ENCODE measurements at regions of chr9 and their contacts with region 1.

Region 1: DNA sequence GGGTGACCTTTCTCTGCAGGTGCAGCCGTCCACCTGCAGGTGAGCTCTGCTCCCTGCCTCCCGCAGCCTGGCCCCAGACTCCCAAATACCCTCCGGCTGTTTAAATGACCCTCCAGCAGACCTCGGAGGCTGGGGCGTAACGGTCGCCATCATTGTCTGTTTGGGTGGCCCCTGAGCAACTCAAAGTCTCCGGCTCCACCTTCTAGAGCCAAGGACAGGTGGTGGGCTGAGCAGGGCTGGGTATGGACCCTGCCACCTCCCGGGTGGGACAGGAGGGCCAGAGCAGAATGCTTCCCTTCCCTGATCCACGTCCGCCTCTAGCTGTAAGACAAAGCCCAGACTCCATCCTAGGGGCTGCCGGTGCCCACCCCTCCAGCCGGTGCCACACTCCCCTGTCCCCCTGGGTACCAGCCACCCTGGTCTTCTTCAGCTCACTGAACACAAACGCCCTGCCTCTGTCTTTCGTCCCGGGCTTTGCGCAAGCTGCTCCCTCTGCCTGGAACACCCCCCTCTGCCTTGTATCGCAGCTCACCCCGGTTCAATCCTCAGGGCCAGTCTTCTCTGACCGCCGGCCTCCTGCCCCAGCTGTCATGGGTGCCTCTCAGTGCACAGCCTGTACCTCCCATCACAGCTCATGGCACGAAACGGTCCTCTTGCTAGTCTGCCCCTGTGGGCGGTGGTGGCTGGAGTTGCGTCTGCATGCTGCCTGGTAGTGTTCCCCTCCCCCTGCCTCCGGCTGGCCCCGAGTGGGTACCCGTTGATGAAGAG is 34.3 kb upstream of the FIBCD1 start:
- DNase-seq: peak in 3 of 4 experiments; percentile 63 to 65 (median 64)
- ATAC-seq: peak; percentile 8
- H3K4me3 ChIP-seq: no peak overlapping the region
- H3K27ac ChIP-seq: no peak overlapping the region
- H3K4me1 ChIP-seq: peaks cover 0 to 20% of the 10 kb centered on the region in 2 experiments; a peak in 1 of 5 replicates
- H3K27me3 ChIP-seq: peaks cover 78 to 98% of the 10 kb centered on the region in 2 experiments
- CTCF ChIP-seq: no peak
- EP300 ChIP-seq: no peak
- POLR2A ChIP-seq: no peak
- RAD21 ChIP-seq: no peak

Region 2: DNA sequence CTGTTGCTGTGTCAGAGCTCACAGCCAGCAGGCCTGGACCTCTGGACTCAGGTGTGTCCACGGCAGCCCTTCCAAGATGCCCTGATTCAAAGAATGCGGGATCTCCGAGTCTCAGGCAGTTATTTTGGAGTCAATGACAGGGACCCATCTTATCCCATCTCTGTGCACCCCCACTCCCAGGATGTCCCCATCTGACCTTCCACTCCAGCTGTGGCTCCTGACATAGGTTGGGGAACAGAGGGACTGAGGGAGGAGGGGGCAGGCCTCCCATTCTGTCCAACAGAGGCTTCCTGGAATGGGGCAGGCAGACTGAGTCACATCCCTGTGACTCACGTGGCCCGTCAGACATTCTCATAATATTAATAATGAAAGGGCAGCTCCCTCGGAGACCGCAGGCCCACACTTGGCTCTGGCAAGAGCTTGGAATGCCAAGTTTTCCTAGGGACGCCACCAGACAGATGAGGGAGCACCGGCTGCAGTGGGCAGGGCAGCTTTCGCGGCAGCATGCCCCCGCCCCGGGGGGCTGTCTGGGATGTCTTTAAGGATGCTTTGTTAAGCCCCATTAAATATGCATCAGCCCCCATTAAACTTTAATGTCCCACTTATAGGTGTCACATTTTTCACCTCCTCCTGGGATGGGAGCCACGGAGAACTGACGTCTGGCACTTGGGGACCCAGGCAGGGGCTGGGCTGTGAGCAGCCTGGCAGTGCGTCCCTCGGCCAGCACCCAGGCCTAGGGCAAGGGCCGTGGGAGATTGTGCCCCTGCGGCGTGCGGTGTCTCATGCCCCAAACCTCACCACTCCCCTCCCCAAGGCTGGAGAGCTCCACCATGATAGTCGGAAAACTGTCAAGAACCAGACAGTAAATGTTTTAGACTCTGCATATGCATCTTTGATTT is 10.7 kb before region 1 on chr9:
- CTCF ChIA-PET with region 1: no interaction called
- POLR2A ChIA-PET with region 1: interaction called, 26 read pairs
- in situ Hi-C with region 1: no loop called
- intact Hi-C with region 1: no loop called
- DNase-seq: peak; percentile 40 to 66 (median 61)
- ATAC-seq: peak; percentile 12
- H3K4me3 ChIP-seq: no peak overlapping the region
- H3K27ac ChIP-seq: no peak overlapping the region
- H3K4me1 ChIP-seq: peaks cover 0 to 9% of the 10 kb centered on the region in 2 experiments; a peak in 1 of 5 replicates
- H3K27me3 ChIP-seq: peaks cover 62 to 76% of the 10 kb centered on the region in 2 experiments
- CTCF ChIP-seq: no peak
- EP300 ChIP-seq: no peak
- POLR2A ChIP-seq: no peak
- RAD21 ChIP-seq: no peak

Region 3: GRCh38 chr9:130990978-130991777 is 17.8 kb after region 1 on chr9:
- CTCF ChIA-PET with region 1: no interaction called
- POLR2A ChIA-PET with region 1: interaction called, 86 read pairs
- in situ Hi-C with region 1: no loop called
- intact Hi-C with region 1: no loop called
- DNase-seq: peak in 2 of 4 experiments; percentile 89 to 92
- ATAC-seq: peak; percentile 8
- H3K4me3 ChIP-seq: no peak overlapping the region
- H3K27ac ChIP-seq: no peak overlapping the region
- H3K4me1 ChIP-seq: peaks cover 0 to 45% of the 10 kb centered on the region in 2 experiments; a peak in 2 of 5 replicates
- H3K27me3 ChIP-seq: peaks cover 85 to 100% of the 10 kb centered on the region in 2 experiments
- CTCF ChIP-seq: no peak
- EP300 ChIP-seq: no peak
- POLR2A ChIP-seq: no peak
- RAD21 ChIP-seq: no peak